Activated T-helper 2 cell treated with anti-CD3 and anti-CD28 coated beads, Interferon-gamma antibody, Interleukin-2, Interleukin-4, amounts not matched to agents 10 μg/mL and 5 μg/mL and 100 μg/mL, durations not matched to agents 14 hours and 24 hours and 36 hours (primary cell): ENCODE measurements at regions of chr3 and their contacts with region 1.

Region 1: GRCh38 chr3:143847787-143848631 is at the start of gene SLC9A9:
- DNase-seq: no peak
- H3K4me3 Mint-ChIP-seq: peak within 1 kb of the TSS; percentile 90
- H3K27ac Mint-ChIP-seq: peak within 1 kb of the TSS; percentile 83
- H3K4me1 Mint-ChIP-seq: peaks cover 47% of the 10 kb centered on the region
- H3K27me3 Mint-ChIP-seq: peaks cover 16% of the 10 kb centered on the region
- total RNA-seq, gene SLC9A9: 1.6 and 2.0 TPM in 2 replicates

Region 2: GRCh38 chr3:143727391-143727790 is 120.6 kb before region 1 on chr3:
- intact Hi-C with region 1: no loop called
- DNase-seq: no peak
- H3K4me3 Mint-ChIP-seq: no peak overlapping the region
- H3K27ac Mint-ChIP-seq: no peak overlapping the region
- H3K4me1 Mint-ChIP-seq: no peaks in the 10 kb centered on the region
- H3K27me3 Mint-ChIP-seq: no peaks in the 10 kb centered on the region

Region 3: GRCh38 chr3:143775459-143775858 is 72.5 kb before region 1 on chr3:
- intact Hi-C with region 1: loop called (anchors 2 kb)
- DNase-seq: no peak
- H3K4me3 Mint-ChIP-seq: no peak overlapping the region
- H3K27ac Mint-ChIP-seq: no peak overlapping the region
- H3K4me1 Mint-ChIP-seq: no peaks in the 10 kb centered on the region
- H3K27me3 Mint-ChIP-seq: peaks cover 6% of the 10 kb centered on the region

Region 4: DNA sequence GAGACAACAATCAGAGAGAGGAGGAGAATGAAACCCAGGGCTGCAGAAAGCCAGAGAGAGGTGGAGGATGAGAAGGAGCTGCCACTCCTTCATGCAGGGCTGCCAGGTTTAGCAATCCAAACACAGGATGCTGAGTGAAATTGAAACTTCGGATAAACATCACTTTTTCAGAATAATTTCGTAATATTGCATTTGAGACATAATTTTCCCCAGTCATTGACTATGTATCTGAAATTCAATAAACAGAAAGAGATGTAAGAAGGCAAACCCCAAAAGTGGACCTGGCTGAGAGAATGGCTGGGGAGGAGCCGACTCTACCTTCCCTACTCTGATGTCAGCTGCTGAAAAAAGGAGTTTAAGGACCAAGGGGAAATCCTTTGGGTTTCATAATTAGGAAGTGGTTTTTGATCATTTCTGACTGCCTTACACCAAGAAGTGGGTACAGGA is 33.5 kb before region 1 on chr3:
- intact Hi-C with region 1: loop called (anchors 2 kb)
- DNase-seq: peak; percentile 13
- H3K4me3 Mint-ChIP-seq: peak overlapping the region; percentile 13
- H3K27ac Mint-ChIP-seq: peak overlapping the region; percentile 14
- H3K4me1 Mint-ChIP-seq: peaks cover 22% of the 10 kb centered on the region
- H3K27me3 Mint-ChIP-seq: no peaks in the 10 kb centered on the region

Region 5: GRCh38 chr3:143831208-143831607 is 16.8 kb before region 1 on chr3:
- intact Hi-C with region 1: loop called (anchors 1 kb)
- DNase-seq: no peak
- H3K4me3 Mint-ChIP-seq: no peak overlapping the region
- H3K27ac Mint-ChIP-seq: no peak overlapping the region
- H3K4me1 Mint-ChIP-seq: peaks cover 32% of the 10 kb centered on the region
- H3K27me3 Mint-ChIP-seq: peaks cover 4% of the 10 kb centered on the region

Region 6: DNA sequence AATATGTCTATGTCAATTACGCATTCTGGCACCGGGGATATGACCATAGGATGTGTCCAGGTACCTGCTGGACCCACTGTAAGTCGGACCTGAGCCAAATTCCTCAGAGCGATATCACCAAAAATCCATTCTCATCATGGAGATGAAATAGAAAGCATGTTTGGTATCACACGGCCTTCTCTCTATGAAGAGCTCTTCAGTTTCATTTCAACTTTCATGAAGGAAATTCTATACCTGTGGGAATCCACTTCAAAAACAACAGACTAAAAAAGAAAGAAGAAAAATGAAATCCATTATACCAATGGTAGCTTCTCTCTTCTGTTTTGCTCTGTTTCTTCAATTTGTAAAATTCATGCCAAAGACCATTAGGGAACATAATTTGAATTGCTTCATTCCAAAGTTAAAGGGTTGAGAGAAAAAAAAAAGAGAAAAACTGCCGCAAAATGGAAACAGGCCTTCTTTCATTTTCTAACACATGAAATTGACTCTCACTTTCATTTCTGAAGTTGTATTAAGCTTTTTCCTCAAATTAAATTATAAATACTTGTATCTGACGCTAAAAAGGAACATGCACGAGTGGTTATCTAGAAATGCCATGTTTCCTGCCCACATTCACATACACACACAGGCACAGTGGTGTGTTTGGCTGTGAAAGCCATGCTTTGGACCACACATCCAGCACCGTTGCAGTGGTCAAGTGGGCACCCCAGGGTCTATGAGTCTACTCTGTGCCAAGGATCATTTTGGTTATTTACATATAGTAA is 76.7 kb after region 1 on chr3:
- intact Hi-C with region 1: no loop called
- DNase-seq: no peak
- H3K4me3 Mint-ChIP-seq: no peak overlapping the region
- H3K27ac Mint-ChIP-seq: no peak overlapping the region
- H3K4me1 Mint-ChIP-seq: peaks cover 4% of the 10 kb centered on the region
- H3K27me3 Mint-ChIP-seq: peaks cover 1% of the 10 kb centered on the region